ENCODE measurements at regions of chr11 and their contacts with region 1.

Region 1: GRCh38 chr11:55854704-55855103 is 16.2 kb downstream of the OR5D16 start:
- DNase-seq: no peak
- ATAC-seq: no peak
- H3K4me3 ChIP-seq: no peak overlapping the region
- H3K27ac ChIP-seq: no peak overlapping the region
- H3K4me1 ChIP-seq: no peaks in the 10 kb centered on the region
- H3K27me3 ChIP-seq: no peaks in the 10 kb centered on the region
- CTCF ChIP-seq: no peak
- POLR2A ChIP-seq: no peak
- RAD21 ChIP-seq: no peak

Region 2: GRCh38 chr11:55773138-55773537 is 81.6 kb before region 1 on chr11 and contains the start of gene OR5D13:
- CTCF ChIA-PET with region 1: no interaction called
- POLR2A ChIA-PET with region 1: no interaction called
- RAD21 ChIA-PET with region 1: no interaction called
- intact Hi-C with region 1: loop called (anchors 5 kb)
- DNase-seq: no peak
- ATAC-seq: no peak
- H3K4me3 ChIP-seq: no peak within 1 kb of the TSS
- H3K27ac ChIP-seq: no peak within 1 kb of the TSS
- H3K4me1 ChIP-seq: no peaks in the 10 kb centered on the region
- H3K27me3 ChIP-seq: no peaks in the 10 kb centered on the region
- CTCF ChIP-seq: no peak
- POLR2A ChIP-seq: no peak
- RAD21 ChIP-seq: no peak
- total RNA-seq, gene OR5D13: not detected